Activated T-helper 2 cell treated with anti-CD3 and anti-CD28 coated beads, Interferon-gamma antibody, Interleukin-2, Interleukin-4, amounts not matched to agents 10 μg/mL and 5 μg/mL and 100 μg/mL, durations not matched to agents 14 hours and 24 hours and 36 hours (primary cell): ENCODE measurements at regions of chr11 and their contacts with region 1.

Region 1: DNA sequence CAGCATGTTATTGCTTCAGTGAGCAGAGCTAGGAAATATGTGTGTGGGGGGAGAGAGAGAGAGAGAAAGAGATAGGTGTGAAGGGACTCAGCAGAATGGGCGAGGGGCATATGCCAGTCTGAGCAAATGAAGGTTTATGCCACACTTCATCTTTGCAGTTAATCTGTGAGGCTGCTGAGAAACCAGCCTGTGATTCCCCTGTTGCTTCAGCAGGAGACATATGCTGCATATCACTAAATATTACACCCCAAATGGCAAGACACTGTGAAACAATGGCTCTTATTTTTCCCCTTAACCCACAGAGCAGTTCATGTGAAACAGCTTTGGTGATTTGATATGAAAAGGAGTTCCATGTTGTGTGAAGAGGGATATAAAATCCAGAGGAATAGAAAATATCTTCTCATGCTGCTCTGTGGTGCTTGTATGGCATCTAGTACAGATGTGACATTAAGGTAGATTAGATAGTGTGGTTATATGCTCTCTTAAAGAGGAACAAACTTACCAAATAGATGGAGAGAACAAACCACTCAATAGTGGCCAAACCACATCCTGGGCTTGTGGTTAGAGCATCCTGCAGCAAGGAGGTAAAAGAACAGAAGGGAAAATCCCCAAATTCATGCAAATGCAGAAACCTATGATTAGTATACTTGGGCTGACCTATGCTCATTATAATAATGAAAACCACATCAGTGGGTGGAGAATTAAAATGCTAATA is 864.2 kb downstream of the FAM181B start:
- DNase-seq: peak; percentile 86
- H3K4me3 Mint-ChIP-seq: peak overlapping the region; percentile 55
- H3K27ac Mint-ChIP-seq: peak overlapping the region; percentile 88
- H3K4me1 Mint-ChIP-seq: peaks cover 43% of the 10 kb centered on the region
- H3K27me3 Mint-ChIP-seq: peaks cover 1% of the 10 kb centered on the region

Region 2: GRCh38 chr11:81787584-81788049 is 81.9 kb before region 1 on chr11:
- intact Hi-C with region 1: loop called (anchors 1 kb)
- DNase-seq: no peak
- H3K4me3 Mint-ChIP-seq: no peak overlapping the region
- H3K27ac Mint-ChIP-seq: peak overlapping the region; percentile 70
- H3K4me1 Mint-ChIP-seq: peaks cover 16% of the 10 kb centered on the region
- H3K27me3 Mint-ChIP-seq: peaks cover 3% of the 10 kb centered on the region

Region 3: DNA sequence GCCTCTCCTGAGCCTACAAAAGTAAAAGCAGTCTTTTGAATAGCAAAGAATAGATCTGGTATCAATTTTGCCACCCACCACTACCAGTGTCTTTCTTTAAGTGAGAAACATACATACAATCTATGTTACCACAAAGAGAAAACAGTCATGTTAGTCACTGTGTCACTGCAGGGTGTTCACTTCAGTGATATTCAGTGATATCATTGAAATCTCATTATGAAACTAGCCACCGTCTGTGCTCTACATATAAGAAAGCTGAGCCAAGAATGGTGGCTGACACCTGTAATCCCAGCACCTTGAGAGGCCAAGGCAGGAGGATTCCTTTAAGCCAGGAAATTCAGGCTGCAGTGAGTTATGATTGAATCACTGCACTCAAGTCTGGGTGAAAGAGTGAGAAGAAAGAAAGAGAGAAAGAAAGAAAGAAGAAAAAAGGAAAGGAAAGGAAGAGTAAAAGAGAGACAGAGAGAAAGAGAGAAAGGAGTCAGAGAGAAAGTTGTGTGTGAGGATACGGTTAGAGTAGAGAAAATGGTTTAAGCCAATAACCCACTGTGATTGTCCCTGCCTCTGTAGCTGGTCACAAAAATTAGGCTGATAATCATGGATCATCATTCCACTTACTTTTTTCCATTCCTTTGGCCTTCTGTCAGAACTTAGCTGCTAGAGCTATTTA is 17.0 kb after region 1 on chr11:
- intact Hi-C with region 1: loop called (anchors 1 kb)
- DNase-seq: no peak
- H3K4me3 Mint-ChIP-seq: no peak overlapping the region
- H3K27ac Mint-ChIP-seq: peak overlapping the region; percentile 54
- H3K4me1 Mint-ChIP-seq: peaks cover 12% of the 10 kb centered on the region
- H3K27me3 Mint-ChIP-seq: peaks cover 8% of the 10 kb centered on the region

Region 4: DNA sequence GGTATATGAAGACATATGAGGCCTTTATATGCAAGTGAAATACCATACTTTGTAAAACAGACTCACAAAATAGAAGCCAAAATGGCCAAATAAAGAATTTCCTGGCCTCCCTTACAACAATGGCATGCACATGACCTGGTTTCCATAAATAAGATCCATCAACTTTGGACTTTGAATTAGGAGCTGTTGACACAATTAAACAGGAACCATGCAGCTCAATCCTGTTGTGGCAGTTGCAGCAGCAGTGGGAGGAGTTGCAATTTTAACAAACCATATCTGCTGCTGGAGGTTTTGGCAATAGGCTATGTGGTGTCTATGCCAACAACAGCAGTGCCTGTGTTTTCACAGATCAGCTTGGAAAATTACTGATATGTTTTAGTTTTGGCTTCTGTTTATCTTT is 45.5 kb after region 1 on chr11:
- intact Hi-C with region 1: no loop called
- DNase-seq: no peak
- H3K4me3 Mint-ChIP-seq: no peak overlapping the region
- H3K27ac Mint-ChIP-seq: no peak overlapping the region
- H3K4me1 Mint-ChIP-seq: peaks cover 2% of the 10 kb centered on the region
- H3K27me3 Mint-ChIP-seq: no peaks in the 10 kb centered on the region

Region 5: DNA sequence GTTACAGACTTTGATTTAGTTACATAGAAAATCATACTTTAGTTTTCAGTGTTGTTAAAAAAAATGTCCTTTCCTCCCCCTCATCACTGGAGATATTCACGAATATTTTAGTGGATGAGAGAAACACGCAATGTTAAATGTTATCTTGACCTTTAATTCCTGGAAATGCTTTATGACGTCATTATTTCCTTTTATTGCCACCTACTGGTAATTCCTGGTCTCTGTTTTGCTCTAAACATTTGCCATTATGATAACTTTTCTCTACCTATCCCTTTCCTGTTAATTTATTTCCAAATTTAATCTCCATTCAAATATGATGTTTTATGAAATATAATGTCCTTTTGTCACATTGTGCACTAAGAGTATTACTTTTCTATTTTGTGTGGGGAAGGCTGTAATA is 93.5 kb after region 1 on chr11:
- intact Hi-C with region 1: loop called (anchors 2 kb)
- DNase-seq: no peak
- H3K4me3 Mint-ChIP-seq: no peak overlapping the region
- H3K27ac Mint-ChIP-seq: no peak overlapping the region
- H3K4me1 Mint-ChIP-seq: peaks cover 26% of the 10 kb centered on the region
- H3K27me3 Mint-ChIP-seq: no peaks in the 10 kb centered on the region

Region 6: GRCh38 chr11:82046778-82047177 is 177.3 kb after region 1 on chr11:
- intact Hi-C with region 1: no loop called
- DNase-seq: no peak
- H3K4me3 Mint-ChIP-seq: no peak overlapping the region
- H3K27ac Mint-ChIP-seq: no peak overlapping the region
- H3K4me1 Mint-ChIP-seq: no peaks in the 10 kb centered on the region
- H3K27me3 Mint-ChIP-seq: peaks cover 1% of the 10 kb centered on the region